ENCODE measurements at regions of chr16 and their contacts with region 1.

Region 1: DNA sequence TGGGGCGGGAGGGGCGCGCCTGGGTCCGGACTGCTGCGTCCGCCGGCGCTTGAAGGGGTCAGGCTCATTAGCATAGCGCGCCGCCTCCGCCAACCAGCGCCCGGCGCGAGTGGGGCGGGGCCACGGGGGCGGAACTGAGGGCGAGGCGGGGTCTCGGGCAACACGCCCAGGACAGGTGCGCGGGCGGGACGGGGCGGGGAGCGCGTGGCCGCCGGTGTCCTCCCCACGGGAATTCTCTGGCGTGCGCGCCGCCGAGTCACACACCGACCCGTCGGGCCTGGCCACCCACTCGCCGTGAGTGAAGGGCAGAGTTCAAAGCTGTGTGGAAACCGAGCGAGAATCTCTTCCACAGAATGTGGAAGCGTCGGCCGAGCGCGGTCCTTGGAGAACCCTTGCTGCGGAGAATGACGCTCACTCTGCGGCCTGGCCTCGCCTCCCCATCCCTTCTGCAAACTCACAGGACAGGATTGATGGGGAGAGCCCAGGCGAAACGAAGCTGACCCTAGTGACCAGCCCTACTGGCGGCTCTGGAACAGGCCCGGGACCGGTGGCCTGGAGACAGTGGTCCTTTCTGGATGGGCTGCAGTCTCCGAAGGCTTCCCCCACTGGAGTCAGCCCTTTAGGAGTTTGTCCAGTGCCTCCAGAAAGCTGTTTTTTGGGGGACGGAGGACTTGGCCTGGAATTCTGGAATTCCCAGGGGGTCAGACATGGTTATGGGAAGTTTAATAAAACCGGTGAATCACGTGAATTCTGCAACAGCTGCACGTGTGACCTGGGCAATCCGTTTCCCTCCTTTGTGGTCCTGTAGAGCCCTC is at the start of gene SNAI3:
- DNase-seq: peak; percentile 67 to 83 (median 77)
- H3K4me3 ChIP-seq: peak within 1 kb of the TSS in 2 of 4 donors; percentile 51 to 54
- H3K27ac ChIP-seq: peak within 1 kb of the TSS in 1 of 5 donors; percentile 18
- H3K4me1 ChIP-seq: peaks cover 13 to 22% of the 10 kb centered on the region in 2 donors
- H3K27me3 ChIP-seq: peaks cover 20% of the 10 kb centered on the region
- CTCF ChIP-seq: no peak
- POLR2A ChIP-seq: no peak
- total RNA-seq, gene SNAI3: 0.06 to 1.7 (median 0.57) TPM in 7 of 9 donors, not detected in the others

Region 2: DNA sequence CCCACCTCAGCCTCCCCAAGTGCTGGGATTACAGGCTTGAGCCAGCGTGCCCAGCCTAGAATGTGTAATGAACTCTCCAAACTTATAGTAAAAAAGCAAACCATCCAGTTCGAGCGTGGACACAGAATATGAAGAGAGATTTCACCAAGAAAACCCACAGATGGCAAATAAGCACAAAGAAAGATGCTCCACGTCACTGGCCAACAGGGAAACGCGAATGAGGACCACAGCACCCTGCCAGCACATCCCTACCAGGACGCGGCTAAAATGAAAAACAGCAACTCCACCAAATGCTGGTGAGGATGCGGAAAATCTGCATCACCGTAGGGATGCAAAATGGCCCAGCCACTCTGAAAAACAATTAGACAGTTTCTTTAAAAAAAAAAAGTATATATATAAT is 25.2 kb before region 1 on chr16:
- intact Hi-C with region 1: loop called in 1 of 2 experiments (anchors 2 kb)
- DNase-seq: no peak
- H3K4me3 ChIP-seq: no peak overlapping the region
- H3K27ac ChIP-seq: no peak overlapping the region
- H3K4me1 ChIP-seq: peaks cover 6 to 14% of the 10 kb centered on the region in 2 donors
- H3K27me3 ChIP-seq: no peaks in the 10 kb centered on the region
- CTCF ChIP-seq: no peak
- POLR2A ChIP-seq: no peak

Measured in adrenal gland (tissue), 19 donors.